ENCODE measurements at regions of chr1 and their contacts with region 1.

Region 1: DNA sequence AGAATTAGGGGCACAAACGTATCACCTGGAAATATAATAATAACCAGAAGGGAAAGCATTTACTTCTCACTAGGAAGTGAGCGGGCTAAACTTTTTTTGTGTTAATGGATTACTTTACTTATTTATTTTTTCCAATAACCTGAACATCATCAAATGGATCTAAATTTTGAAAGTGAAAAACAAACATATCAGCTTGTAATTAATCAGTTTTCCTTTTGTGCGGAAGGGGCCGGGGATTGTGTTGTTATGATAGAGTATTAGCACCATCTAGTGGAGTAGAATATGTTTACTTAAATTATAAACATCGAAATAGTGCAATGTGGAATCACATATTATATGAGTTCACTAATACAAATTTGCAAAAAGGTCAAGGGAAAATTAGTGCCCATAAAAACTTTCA is 9.0 kb downstream of the CFH start:
- DNase-seq: no peak
- H3K4me3 ChIP-seq: no peak overlapping the region
- H3K27me3 ChIP-seq: no peaks in the 10 kb centered on the region
- CTCF ChIP-seq: peak; percentile 27; the same call in 1 of the 2 replicates

Region 2: DNA sequence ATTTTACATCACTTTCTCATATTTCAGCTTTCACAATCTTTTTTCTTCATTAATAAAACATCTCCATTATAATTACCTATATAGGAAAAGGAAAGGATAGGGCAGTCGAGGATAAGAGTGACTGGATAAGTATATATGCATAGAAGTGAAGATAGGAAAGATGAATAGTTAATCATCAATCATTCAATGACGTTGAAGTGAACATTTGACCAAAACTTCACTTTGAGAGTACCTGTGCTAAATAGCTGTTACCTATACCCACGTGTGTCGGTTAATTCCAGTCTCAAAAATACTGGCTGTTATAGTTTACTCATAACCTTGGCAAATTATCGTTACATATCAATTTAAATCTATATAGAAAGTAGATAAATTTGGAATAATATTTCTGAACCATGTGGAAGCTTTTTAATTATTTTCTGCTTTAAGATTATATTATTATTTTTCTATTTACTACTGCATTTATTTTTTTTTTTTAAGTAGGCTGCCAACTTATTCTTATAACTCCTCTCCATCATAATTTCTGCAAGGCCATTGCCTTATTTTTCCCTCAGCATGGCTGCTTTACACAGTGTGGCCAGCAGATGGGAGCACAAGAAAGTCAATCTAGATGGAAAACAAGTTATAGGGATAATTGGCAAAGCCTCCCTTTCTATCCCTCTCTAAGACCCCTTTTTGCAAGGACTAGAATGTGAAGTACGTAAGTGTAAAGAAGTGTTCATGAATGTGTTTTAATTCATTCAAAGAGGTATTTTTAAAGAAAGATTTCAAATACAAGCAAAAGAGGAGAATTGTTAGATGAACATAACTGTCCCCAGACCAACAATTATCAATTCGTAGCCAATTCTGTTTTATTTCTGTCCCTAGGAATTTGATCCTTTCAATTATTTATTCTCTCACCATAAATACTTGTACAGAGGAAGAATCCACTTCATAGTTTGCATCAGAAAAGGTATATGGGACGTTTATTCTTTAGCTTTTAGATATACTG is 343.0 kb before region 1 on chr1:
- CTCF ChIA-PET with region 1: interaction called, 24 read pairs
- POLR2A ChIA-PET with region 1: no interaction called
- DNase-seq: no peak
- H3K4me3 ChIP-seq: no peak overlapping the region
- H3K27me3 ChIP-seq: no peaks in the 10 kb centered on the region
- CTCF ChIP-seq: peak; percentile 73

Region 3: DNA sequence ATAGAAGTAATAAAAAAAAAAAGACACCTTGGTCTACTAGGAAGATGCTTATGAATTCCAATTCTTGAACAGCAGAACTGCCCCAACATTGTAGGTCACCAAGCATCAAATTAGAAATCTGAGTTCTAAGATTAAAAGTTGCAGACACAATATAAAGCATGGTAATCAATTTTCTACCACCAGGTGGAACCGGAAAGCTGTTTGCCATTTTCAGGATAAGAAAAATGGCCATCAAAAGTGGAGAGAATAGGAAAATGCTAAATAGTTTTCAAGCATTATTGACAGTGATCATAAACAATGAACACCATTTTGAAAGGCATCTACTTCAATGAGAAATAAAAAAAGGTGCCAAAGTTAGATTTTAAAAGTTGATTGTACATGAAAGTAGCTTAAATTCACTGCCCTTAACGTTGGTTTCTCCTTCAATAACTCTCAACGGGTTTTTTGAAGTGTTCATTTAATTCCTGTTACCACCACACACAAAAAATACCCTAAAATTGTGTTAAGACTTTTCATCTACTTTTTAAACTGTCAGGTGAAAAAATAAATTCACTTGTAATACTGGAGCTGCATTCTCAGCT is 305.6 kb before region 1 on chr1:
- CTCF ChIA-PET with region 1: interaction called, 49 read pairs
- POLR2A ChIA-PET with region 1: no interaction called
- DNase-seq: no peak
- H3K4me3 ChIP-seq: no peak overlapping the region
- H3K27me3 ChIP-seq: no peaks in the 10 kb centered on the region
- CTCF ChIP-seq: peak; percentile 59

Region 4: DNA sequence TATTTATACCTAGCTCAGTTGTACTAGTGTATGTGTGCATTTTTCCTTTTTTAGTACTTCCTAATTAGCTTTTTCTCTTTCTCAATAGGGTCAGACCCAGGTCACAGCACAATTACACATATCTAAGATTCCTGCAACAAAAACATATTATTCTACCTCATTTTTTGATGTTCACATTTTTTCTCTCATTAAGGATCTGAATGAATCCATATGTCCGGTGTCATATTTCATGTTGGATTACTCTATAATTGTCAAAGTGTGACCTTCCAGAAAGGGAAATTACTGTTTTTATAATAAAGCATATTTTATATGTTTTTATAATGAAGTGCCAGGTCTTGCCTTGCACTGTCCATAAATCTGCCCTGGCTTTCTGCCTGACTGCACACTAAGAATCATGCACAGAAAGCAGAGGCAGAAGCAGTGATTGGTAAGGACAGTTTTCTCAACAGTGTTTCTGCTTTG is 196.3 kb before region 1 on chr1:
- CTCF ChIA-PET with region 1: no interaction called
- POLR2A ChIA-PET with region 1: no interaction called
- DNase-seq: peak; percentile 39
- H3K4me3 ChIP-seq: no peak overlapping the region
- H3K27me3 ChIP-seq: no peaks in the 10 kb centered on the region
- CTCF ChIP-seq: no peak